ENCODE measurements at regions of chr5 and their contacts with region 1.

Region 1: GRCh38 chr5:149141224-149141956 is at the start of gene ABLIM3:
- DNase-seq: peak; percentile 80
- H3K4me3 Mint-ChIP-seq: peak within 1 kb of the TSS; percentile 41
- H3K27ac Mint-ChIP-seq: no peak within 1 kb of the TSS
- H3K4me1 Mint-ChIP-seq: peaks cover 4% of the 10 kb centered on the region
- H3K27me3 Mint-ChIP-seq: peaks cover 22% of the 10 kb centered on the region
- total RNA-seq, gene ABLIM3: 0.10 to 0.24 TPM

Region 2: DNA sequence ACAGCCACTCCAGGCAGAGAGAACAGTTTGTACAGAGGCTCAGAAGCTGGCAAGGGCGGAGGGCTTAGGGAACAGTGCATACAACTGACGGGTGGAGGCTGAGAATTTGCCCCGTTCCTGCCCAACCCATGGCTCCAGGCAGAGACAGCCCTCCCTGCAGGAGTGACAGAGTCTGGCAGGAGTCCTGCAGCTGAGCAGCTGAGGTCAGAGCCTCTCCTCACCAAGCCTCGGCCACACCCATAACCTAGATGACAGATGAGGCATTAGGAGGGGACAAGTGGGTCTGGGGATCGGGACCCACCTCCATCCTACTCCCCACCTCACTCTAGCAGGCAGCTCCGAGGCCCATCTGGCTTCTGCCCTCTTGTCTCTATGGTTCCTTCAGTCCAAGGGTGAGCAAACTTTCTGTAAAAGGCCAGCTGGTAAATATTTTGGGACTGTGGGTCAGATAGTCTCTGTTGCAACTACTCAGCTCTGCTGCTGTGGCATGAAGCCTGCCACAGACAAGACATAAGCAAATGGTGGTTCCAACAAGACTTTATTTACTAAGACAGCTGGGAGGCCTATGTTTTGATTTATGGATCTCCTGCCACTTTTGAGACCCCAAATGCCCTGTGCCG is 162.2 kb before region 1 on chr5:
- CTCF ChIA-PET with region 1: no interaction called
- POLR2A ChIA-PET with region 1: no interaction called
- intact Hi-C with region 1: no loop called
- DNase-seq: no peak
- H3K4me3 Mint-ChIP-seq: no peak overlapping the region
- H3K27ac Mint-ChIP-seq: no peak overlapping the region
- H3K4me1 Mint-ChIP-seq: no peaks in the 10 kb centered on the region
- H3K27me3 Mint-ChIP-seq: peaks cover 3% of the 10 kb centered on the region

Region 3: GRCh38 chr5:149024477-149024876 is 116.9 kb before region 1 on chr5:
- CTCF ChIA-PET with region 1: no interaction called
- POLR2A ChIA-PET with region 1: no interaction called
- intact Hi-C with region 1: no loop called
- DNase-seq: no peak
- H3K4me3 Mint-ChIP-seq: no peak overlapping the region
- H3K27ac Mint-ChIP-seq: no peak overlapping the region
- H3K4me1 Mint-ChIP-seq: peaks cover 2% of the 10 kb centered on the region
- H3K27me3 Mint-ChIP-seq: peaks cover 3% of the 10 kb centered on the region

Region 4: GRCh38 chr5:149151717-149152116 is 10.3 kb after region 1 on chr5:
- CTCF ChIA-PET with region 1: interaction called, 11 read pairs
- POLR2A ChIA-PET with region 1: no interaction called
- intact Hi-C with region 1: no loop called
- DNase-seq: no peak
- H3K4me3 Mint-ChIP-seq: no peak overlapping the region
- H3K27ac Mint-ChIP-seq: no peak overlapping the region
- H3K4me1 Mint-ChIP-seq: peaks cover 4% of the 10 kb centered on the region
- H3K27me3 Mint-ChIP-seq: peaks cover 4% of the 10 kb centered on the region

Region 5: DNA sequence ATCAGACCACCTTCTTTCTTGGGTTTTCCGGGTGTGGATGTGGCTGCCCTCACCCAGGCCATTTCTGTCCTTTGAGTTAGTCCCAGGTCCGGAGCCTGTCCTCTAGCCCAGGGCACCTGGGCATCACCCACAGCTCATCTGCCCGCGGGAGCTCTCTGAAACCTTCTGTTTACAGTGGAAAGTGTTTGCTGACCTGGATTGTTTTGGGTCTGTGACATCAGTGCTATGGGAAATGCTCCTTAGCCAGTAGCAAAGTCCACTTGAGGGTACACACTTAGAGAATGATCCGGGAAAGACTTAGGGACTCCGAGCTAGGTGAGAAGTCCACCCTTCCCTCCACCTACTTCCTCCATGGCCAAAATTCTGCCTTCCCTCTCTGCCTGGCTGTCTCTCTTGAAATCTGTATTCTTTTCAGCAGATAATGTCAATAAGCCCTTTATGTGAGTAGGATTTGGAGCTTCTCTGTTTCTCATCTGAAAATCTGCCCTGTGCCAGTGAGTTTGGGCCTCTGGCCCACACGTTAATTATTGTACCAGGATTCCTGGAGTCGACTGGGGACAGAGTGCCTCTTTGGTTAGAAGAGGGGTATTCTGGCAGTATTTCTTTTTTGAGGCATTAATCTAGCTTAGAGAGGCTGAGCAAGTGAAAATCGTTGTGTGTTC is 19.8 kb after region 1 on chr5:
- CTCF ChIA-PET with region 1: interaction called, 12 read pairs
- POLR2A ChIA-PET with region 1: no interaction called
- intact Hi-C with region 1: no loop called
- DNase-seq: no peak
- H3K4me3 Mint-ChIP-seq: no peak overlapping the region
- H3K27ac Mint-ChIP-seq: no peak overlapping the region
- H3K4me1 Mint-ChIP-seq: peaks cover 2% of the 10 kb centered on the region
- H3K27me3 Mint-ChIP-seq: no peaks in the 10 kb centered on the region

Region 6: DNA sequence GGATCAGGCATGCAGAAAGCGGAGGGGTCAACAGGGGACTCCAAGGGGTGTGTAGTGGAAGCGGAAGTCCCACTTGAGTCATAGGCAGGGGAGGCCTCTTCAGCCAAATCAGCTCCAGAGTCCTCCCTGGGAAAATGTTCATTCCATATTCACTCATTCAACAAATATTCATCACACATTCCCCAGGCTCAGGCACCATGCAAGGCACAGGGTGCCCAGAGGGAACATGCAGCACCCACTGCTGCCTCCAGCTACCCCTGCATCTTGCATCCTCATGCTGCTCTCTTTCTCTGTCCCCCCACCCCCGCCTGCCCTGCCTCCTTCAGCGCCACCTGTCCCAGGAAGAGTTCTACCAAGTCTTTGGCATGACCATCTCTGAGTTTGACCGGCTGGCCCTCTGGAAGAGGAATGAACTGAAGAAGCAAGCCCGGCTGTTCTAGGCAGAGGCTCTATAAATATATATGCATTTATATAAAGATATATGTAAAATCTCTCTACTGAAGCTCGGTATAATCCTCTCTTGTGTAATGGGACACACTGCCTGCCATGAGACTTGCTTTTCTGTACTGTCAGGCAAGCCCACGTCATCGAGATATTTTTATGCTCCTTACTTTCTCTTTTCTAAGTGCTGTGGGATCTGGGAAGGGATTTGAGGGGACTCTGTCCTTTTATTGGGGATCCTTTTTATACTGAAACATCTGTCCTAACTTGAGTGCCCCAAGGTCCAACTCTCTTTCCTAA is 116.7 kb after region 1 on chr5:
- CTCF ChIA-PET with region 1: interaction called, 103 read pairs
- POLR2A ChIA-PET with region 1: no interaction called
- intact Hi-C with region 1: no loop called
- DNase-seq: no peak
- H3K4me3 Mint-ChIP-seq: no peak overlapping the region
- H3K27ac Mint-ChIP-seq: no peak overlapping the region
- H3K4me1 Mint-ChIP-seq: no peaks in the 10 kb centered on the region
- H3K27me3 Mint-ChIP-seq: no peaks in the 10 kb centered on the region

Region 7: GRCh38 chr5:149268928-149269557 is 127.7 kb after region 1 on chr5:
- CTCF ChIA-PET with region 1: interaction called, 103 read pairs
- POLR2A ChIA-PET with region 1: no interaction called
- intact Hi-C with region 1: loop called (anchors 1 kb)
- DNase-seq: no peak
- H3K4me3 Mint-ChIP-seq: no peak overlapping the region
- H3K27ac Mint-ChIP-seq: no peak overlapping the region
- H3K4me1 Mint-ChIP-seq: peaks cover 12% of the 10 kb centered on the region
- H3K27me3 Mint-ChIP-seq: peaks cover 23% of the 10 kb centered on the region

Region 8: DNA sequence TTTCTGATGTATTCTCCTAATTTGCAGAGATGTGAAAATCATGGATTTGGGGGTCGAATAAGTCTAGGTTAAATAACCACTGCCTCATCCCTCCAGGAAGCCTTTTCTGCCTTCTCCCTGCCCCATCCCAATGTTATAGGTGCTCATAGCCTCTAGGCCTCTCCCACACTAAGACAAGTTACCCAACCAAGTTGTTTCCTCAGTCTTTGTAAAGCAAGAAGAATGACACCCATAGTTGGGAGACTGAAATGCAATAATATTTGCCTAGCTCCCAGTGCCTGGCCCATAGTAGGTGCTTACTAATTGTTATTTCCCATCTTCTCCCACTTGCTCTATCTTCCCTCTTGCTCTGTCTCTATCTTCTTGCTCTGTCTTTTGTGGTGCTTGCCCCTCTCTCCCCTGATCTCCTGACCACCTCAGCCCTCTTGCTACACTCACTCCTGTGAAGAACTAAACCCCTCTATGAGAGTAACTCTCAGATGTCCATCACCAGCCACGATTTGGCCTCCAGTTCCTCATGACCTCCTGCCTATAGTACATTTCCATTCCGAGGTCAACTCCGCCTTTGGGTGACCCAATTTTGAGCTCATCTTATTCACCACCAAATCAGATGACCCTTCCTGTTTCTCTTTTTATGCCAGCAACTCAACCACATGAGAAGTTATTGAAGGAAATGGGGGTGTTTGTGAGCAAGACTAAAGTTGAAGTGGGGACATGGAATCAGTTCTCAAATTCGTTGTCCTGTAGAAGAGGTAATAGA is 137.2 kb after region 1 on chr5:
- CTCF ChIA-PET with region 1: interaction called, 10 read pairs
- POLR2A ChIA-PET with region 1: no interaction called
- intact Hi-C with region 1: no loop called
- DNase-seq: no peak
- H3K4me3 Mint-ChIP-seq: no peak overlapping the region
- H3K27ac Mint-ChIP-seq: no peak overlapping the region
- H3K4me1 Mint-ChIP-seq: no peaks in the 10 kb centered on the region
- H3K27me3 Mint-ChIP-seq: peaks cover 27% of the 10 kb centered on the region